ENCODE measurements at regions of chr7 and their contacts with region 1.

Region 1: DNA sequence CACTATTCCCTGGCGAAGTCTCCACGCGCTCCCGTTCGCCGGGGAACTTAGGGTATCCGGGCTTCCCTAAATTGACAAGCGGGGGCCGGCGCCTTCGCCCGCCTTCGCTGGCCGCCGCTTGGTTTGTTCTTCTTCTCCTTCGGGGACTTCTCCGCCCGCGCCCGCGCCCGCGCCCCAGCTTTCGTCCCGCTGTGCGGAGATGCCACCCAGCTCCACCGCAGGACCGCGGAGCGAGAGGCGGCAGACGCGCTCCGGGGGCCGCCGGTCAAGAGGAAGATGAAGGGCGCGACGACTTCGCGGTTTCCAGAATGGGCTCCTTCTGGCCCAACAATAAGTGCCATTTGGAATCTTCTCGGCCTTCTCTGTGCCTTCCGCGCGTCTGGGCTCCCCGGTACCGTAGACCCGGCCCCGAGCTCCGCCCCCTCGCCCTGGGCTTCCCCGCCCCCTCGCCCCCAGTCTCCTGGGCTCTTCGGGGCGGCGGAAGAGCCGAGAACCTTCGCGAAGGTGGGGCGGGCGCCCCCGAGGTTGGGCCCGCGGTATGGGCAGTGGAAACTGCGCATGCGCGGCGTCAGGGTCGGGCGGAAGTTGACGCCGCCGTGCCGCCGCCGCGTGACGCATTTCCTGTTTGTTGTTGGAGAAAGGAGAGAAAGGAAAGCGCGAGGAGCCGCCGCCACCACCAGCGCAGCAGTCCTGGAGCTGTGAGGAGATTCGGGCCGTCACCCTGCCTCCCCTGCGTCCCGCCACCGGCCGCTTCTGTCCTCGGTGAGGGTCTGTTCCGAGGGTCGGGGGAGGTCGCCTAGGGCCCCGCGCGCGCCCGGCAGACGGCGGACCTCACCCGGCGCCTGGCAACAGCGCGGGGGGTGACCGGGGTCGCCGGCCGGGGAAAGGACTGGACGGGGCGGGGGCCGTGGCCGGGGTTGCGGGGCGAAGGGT is at the start of gene DNAJB6:
- DNase-seq: peak; percentile 92 to 98 (median 95)
- ATAC-seq: peak; percentile 81
- H3K4me3 ChIP-seq: peak within 1 kb of the TSS; percentile 95
- H3K4me3 Mint-ChIP-seq: peak within 1 kb of the TSS; percentile 98
- H3K27ac ChIP-seq: peak within 1 kb of the TSS; percentile 85 to 87
- H3K27ac Mint-ChIP-seq: peak within 1 kb of the TSS; percentile 99
- H3K4me1 ChIP-seq: peaks cover 45% of the 10 kb centered on the region
- H3K4me1 Mint-ChIP-seq: peaks cover 38% of the 10 kb centered on the region
- H3K27me3 ChIP-seq: peaks cover 0 to 3% of the 10 kb centered on the region in 2 experiments
- H3K27me3 Mint-ChIP-seq: peaks cover 4% of the 10 kb centered on the region
- CTCF ChIP-seq: no peak
- total RNA-seq, gene DNAJB6: 232 to 242 TPM

Region 2: DNA sequence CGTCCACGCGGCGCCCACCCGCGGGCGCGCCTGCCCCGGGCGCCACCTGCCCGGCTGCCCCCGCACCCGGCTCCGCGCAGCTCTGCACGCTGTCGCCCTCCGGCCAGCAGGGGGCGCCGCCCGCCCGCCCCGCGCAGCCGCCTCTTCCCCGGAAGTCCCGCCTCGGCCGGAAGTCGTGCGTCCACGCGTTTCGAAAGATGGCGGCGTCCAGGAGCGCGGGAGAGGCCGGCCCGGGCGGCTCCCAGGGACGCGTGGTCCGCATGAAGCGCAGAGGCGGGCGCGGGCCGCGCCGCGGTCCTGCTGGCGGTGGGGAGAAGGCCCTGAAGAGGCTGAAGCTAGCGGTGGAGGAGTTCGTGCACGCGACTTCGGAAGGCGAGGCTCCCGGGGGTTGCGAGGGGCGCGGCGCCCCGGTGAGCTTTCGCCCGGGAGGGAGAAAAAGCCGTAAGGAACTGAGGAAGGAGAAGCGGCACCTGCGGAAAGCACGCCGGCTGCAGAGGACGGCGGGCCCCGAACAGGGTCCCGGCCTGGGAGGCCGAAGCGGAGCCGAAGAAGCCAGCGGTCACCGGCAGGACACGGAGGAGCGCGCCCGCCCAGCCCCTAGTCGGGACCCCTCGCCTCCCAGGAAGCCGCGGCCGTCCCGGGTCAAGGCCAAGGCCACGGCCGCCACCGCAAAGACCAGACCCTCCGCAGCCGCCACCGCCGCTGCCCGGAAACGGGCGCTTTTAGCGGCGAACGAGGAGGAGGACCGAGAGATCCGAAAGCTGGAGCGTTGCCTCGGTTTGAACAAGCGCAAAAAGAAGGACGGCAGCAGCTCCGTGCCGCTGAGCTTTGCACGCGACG is 386.9 kb before region 1 on chr7 and contains the start of gene NOM1:
- CTCF ChIA-PET with region 1: interaction called, 4 read pairs
- POLR2A ChIA-PET with region 1: no interaction called
- intact Hi-C with region 1: loop called in 1 of 2 experiments (anchors 2 kb)
- DNase-seq: peak; percentile 85 to 96 (median 90)
- ATAC-seq: peak; percentile 94
- H3K4me3 ChIP-seq: peak within 1 kb of the TSS; percentile 89
- H3K4me3 Mint-ChIP-seq: peak within 1 kb of the TSS; percentile 97
- H3K27ac ChIP-seq: peak within 1 kb of the TSS in 1 of 2 donors; percentile 50
- H3K27ac Mint-ChIP-seq: peak within 1 kb of the TSS; percentile 82
- H3K4me1 ChIP-seq: peaks cover 30% of the 10 kb centered on the region
- H3K4me1 Mint-ChIP-seq: peaks cover 34% of the 10 kb centered on the region
- H3K27me3 ChIP-seq: peaks cover 0 to 4% of the 10 kb centered on the region in 2 experiments
- H3K27me3 Mint-ChIP-seq: peaks cover 8% of the 10 kb centered on the region
- CTCF ChIP-seq: peak; percentile 50
- total RNA-seq, gene NOM1: 25.5 to 27.6 TPM

Region 3: DNA sequence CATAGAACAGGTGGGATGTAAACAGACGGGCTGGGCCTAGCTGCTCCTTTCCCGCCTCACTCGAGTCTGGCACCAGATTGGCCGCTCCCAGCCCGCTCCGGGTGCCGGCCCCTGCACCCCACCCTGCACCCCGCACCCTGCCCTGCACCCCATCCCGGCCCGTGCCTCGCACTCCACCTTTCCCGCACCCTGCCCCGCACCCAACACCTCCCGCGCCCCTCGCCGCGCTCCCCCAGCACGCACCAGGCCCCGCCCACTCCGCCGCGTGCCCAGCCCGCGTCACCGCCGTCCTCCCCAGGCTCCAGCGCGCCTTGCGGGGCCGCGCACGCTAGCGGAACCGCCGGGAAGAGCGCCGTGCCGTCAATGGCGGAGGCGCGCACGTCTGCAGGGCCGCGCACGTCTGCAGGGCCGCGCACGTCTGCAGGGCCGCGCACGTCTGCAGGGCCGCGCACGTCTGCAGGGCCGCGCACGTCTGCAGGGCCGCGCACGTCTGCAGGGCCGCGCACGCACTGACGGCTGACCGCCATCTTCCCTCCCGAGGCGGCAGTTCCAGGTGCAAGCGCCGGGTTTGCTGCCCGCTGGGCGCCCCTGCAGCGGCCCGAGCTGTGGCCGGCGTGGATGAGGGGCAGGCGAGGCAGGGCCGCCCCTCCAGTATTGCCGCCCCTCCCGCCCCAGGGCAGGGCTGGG is 198.1 kb before region 1 on chr7 and contains the start of gene UBE3C:
- CTCF ChIA-PET with region 1: no interaction called
- POLR2A ChIA-PET with region 1: no interaction called
- intact Hi-C with region 1: loop called in 1 of 2 experiments (anchors 2 kb)
- DNase-seq: peak; percentile 79 to 97 (median 90)
- ATAC-seq: peak; percentile 81
- H3K4me3 ChIP-seq: peak within 1 kb of the TSS; percentile 78
- H3K4me3 Mint-ChIP-seq: peak within 1 kb of the TSS; percentile 92
- H3K27ac ChIP-seq: peak within 1 kb of the TSS; percentile 85 to 86
- H3K27ac Mint-ChIP-seq: peak within 1 kb of the TSS; percentile 98
- H3K4me1 ChIP-seq: peaks cover 44% of the 10 kb centered on the region
- H3K4me1 Mint-ChIP-seq: peaks cover 49% of the 10 kb centered on the region
- H3K27me3 ChIP-seq: no peaks in the 10 kb centered on the region
- H3K27me3 Mint-ChIP-seq: no peaks in the 10 kb centered on the region
- CTCF ChIP-seq: no peak
- total RNA-seq, gene UBE3C: 30.8 to 32.3 TPM

Region 4: DNA sequence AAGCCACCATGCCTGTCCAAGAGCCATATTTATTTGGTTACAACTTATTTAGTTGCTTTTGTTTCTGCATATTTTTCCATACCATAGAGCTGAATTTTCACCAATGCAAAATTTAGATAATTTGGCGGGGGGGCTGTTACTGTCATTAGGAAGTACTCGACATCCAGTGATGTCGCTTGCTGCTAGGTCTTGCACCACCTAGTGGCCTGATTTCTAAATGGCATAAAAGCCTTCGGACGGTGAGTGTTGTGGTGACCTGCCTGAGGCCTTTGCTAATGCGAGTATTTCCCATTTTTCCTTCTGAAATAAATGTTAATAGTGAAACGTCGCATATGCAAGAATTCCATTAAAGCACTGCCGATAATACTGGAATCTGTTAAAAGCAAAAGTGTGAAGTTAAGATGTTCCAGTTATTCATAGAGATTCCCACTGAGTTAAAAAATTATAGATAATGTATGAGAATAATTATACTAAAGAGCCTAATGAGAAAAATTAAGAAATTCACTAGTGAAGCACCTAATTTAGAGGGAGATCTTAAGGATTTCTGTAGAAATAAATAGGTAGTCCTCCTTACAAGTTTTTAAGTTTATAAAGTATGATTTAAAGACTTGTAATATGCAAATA is 85.9 kb before region 1 on chr7:
- CTCF ChIA-PET with region 1: no interaction called
- POLR2A ChIA-PET with region 1: interaction called, 4 read pairs
- intact Hi-C with region 1: loop called in 1 of 2 experiments (anchors 1 kb)
- DNase-seq: peak in 12 of 14 experiments; percentile 14 to 78 (median 28)
- ATAC-seq: peak; percentile 72
- H3K4me3 ChIP-seq: no peak overlapping the region
- H3K4me3 Mint-ChIP-seq: no peak overlapping the region
- H3K27ac ChIP-seq: no peak overlapping the region
- H3K27ac Mint-ChIP-seq: no peak overlapping the region
- H3K4me1 ChIP-seq: no peaks in the 10 kb centered on the region
- H3K4me1 Mint-ChIP-seq: no peaks in the 10 kb centered on the region
- H3K27me3 ChIP-seq: no peaks in the 10 kb centered on the region
- H3K27me3 Mint-ChIP-seq: no peaks in the 10 kb centered on the region
- CTCF ChIP-seq: peak; percentile 91

Region 5: GRCh38 chr7:157386979-157387800 is 50.5 kb after region 1 on chr7:
- CTCF ChIA-PET with region 1: interaction called, 3 read pairs
- POLR2A ChIA-PET with region 1: interaction called, 3 read pairs
- intact Hi-C with region 1: loop called (anchors 1 to 5 kb)
- DNase-seq: peak; percentile 78 to 94 (median 87)
- ATAC-seq: peak; percentile 95
- H3K4me3 ChIP-seq: no peak overlapping the region
- H3K4me3 Mint-ChIP-seq: peak overlapping the region; percentile 30
- H3K27ac ChIP-seq: peak overlapping the region; percentile 13 to 26
- H3K27ac Mint-ChIP-seq: peak overlapping the region; percentile 71
- H3K4me1 ChIP-seq: peaks cover 36% of the 10 kb centered on the region
- H3K4me1 Mint-ChIP-seq: peaks cover 46% of the 10 kb centered on the region
- H3K27me3 ChIP-seq: no peaks in the 10 kb centered on the region
- H3K27me3 Mint-ChIP-seq: no peaks in the 10 kb centered on the region
- CTCF ChIP-seq: peak; percentile 99